Activated CD4-positive, alpha-beta memory T cell treated with anti-CD3 and anti-CD28 coated beads for 36 hours (primary cell): ENCODE measurements at regions of chrX and their contacts with region 1.

Region 1: DNA sequence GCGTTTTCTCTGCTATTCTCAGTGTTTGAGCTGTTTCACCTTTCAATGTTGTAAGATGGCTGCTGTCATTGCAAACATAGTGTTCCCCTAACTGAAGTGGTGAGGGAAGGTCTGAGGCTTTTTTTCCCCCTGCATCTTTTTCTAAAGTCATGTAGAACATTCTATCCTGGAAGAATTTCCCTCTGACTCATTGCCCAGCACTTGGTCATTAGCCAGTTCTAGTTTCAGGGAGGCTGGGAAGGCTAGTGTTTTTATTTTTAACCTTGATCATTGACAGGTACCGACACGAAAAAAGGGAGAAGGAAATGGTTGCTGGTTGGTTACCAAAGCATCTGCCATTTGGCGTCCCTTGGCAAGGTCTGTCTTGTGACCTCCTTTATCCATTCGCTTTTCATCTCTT is 6.6 kb downstream of the LANCL3 start:
- DNase-seq: no peak
- H3K4me3 Mint-ChIP-seq: no peak overlapping the region
- H3K27ac Mint-ChIP-seq: no peak overlapping the region
- H3K4me1 Mint-ChIP-seq: no peaks in the 10 kb centered on the region
- H3K27me3 Mint-ChIP-seq: peaks cover 8% of the 10 kb centered on the region

Region 2: GRCh38 chrX:37543324-37543723 is 34.7 kb before region 1 on chrX:
- CTCF ChIA-PET with region 1: no interaction called
- POLR2A ChIA-PET with region 1: no interaction called
- intact Hi-C with region 1: no loop called
- DNase-seq: no peak
- H3K4me3 Mint-ChIP-seq: no peak overlapping the region
- H3K27ac Mint-ChIP-seq: no peak overlapping the region
- H3K4me1 Mint-ChIP-seq: no peaks in the 10 kb centered on the region
- H3K27me3 Mint-ChIP-seq: no peaks in the 10 kb centered on the region

Region 3: DNA sequence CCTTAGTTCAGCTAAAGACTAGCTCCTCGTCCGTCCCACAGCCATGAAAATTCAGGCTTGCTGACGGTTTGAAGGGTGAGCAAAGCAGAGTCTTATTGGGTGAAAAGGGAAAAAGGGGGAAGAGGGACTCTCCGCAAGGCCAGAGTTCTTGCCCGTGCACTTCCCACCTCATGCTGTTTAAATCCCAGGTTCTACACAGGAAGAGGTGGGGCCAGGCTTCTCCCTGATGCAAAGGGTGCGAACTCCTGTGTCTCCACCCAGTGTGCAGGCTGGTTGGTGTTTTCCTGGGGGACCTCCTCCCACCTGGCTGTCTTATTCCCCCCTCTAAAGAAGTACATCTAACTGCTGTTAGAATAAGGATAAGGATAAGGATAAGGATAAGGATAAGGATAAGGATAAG is 24.6 kb before region 1 on chrX:
- CTCF ChIA-PET with region 1: no interaction called
- POLR2A ChIA-PET with region 1: no interaction called
- intact Hi-C with region 1: no loop called
- DNase-seq: no peak
- H3K4me3 Mint-ChIP-seq: no peak overlapping the region
- H3K27ac Mint-ChIP-seq: no peak overlapping the region
- H3K4me1 Mint-ChIP-seq: no peaks in the 10 kb centered on the region
- H3K27me3 Mint-ChIP-seq: no peaks in the 10 kb centered on the region

Region 4: GRCh38 chrX:37677765-37678164 is 99.7 kb after region 1 on chrX:
- CTCF ChIA-PET with region 1: no interaction called
- POLR2A ChIA-PET with region 1: no interaction called
- intact Hi-C with region 1: no loop called
- DNase-seq: no peak
- H3K4me3 Mint-ChIP-seq: no peak overlapping the region
- H3K27ac Mint-ChIP-seq: no peak overlapping the region
- H3K4me1 Mint-ChIP-seq: peaks cover 2% of the 10 kb centered on the region
- H3K27me3 Mint-ChIP-seq: peaks cover 2% of the 10 kb centered on the region

Region 5: GRCh38 chrX:37825209-37825842 is 247.3 kb after region 1 on chrX:
- CTCF ChIA-PET with region 1: no interaction called
- POLR2A ChIA-PET with region 1: no interaction called
- intact Hi-C with region 1: loop called (anchors 10 kb)
- DNase-seq: peak; percentile 62
- H3K4me3 Mint-ChIP-seq: no peak overlapping the region
- H3K27ac Mint-ChIP-seq: no peak overlapping the region
- H3K4me1 Mint-ChIP-seq: peaks cover 26% of the 10 kb centered on the region
- H3K27me3 Mint-ChIP-seq: no peaks in the 10 kb centered on the region

Region 6: DNA sequence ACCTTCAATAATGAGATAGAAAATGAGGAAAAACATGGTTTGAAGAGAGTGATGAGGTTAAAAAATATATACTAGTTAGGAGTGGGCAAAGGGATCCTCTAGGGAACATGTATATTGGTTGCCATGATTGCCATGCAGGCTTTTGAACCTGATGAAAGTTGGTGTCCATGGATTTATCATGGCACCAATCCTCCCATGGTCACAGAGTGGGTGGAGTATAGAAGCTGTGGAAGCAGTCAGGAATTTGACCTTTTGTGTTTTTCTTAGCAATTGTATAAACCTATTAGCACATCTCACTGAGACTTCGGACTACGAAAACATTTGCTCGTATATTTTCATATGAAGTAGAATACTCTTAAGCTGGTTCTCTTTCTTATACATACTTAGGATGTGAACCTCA is 397.4 kb after region 1 on chrX:
- CTCF ChIA-PET with region 1: no interaction called
- POLR2A ChIA-PET with region 1: no interaction called
- intact Hi-C with region 1: no loop called
- DNase-seq: no peak
- H3K4me3 Mint-ChIP-seq: no peak overlapping the region
- H3K27ac Mint-ChIP-seq: no peak overlapping the region
- H3K4me1 Mint-ChIP-seq: peaks cover 12% of the 10 kb centered on the region
- H3K27me3 Mint-ChIP-seq: peaks cover 9% of the 10 kb centered on the region